ENCODE measurements at regions of chrX and their contacts with region 1.

Region 1: GRCh38 chrX:20266810-20267606 is at the start of gene RPS6KA3:
- DNase-seq: peak; percentile 96
- H3K4me3 Mint-ChIP-seq: peak within 1 kb of the TSS; percentile 92
- H3K27ac Mint-ChIP-seq: peak within 1 kb of the TSS; percentile 96
- H3K4me1 Mint-ChIP-seq: peaks cover 12% of the 10 kb centered on the region
- H3K27me3 Mint-ChIP-seq: peaks cover 7% of the 10 kb centered on the region
- total RNA-seq, gene RPS6KA3: 49.8 and 51.1 TPM in 2 replicates

Region 2: DNA sequence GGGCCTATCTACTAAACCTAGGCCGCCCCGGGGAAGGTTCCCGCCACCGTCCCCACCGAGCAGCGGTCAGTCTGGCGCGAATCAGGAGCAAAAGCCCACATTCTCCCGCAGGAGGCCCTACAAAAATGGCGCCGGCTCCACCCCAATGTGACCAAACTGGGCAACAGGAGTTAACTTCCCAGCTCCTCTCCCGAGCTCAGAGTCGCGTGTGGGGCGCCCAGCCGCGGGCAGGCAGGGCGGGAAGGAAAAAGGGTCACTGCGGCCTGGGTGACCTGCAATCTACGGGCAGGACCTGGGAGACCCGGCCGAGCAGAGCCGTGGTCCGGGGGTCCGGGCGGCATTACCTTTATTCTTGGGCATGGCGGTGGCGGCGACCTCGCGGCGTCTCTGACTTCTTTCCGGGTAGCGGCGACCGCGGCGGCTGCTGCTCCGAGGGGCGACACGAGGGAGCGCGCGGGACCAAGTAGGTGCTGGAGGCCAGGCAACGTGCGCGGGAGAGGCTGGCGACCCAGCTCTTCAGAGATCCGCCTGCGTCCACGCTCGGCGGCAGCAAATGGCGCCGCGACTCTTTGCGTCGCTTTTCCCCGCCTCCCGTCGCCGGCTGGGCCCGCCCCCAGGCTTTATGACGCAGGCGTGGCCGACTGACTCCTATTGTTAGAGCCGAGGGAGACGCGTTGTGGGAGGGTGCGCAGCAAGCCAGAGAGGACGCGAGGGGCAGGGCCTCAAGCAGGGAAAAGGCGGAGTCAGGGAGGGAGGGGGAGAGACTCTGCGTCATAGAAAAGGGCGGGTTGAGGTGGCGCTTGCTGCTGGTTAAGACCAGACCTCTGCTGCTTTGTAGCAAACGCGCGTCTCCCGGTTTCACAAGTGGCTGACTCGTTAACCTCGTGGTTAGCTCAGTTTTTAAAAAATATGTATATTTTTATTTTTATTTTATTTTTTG is 125.5 kb before region 1 on chrX and contains the start of gene EIF1AX:
- intact Hi-C with region 1: loop called (anchors 5 kb)
- DNase-seq: peak; percentile 98
- H3K4me3 Mint-ChIP-seq: peak within 1 kb of the TSS; percentile 88
- H3K27ac Mint-ChIP-seq: peak within 1 kb of the TSS; percentile 89
- H3K4me1 Mint-ChIP-seq: peaks cover 17% of the 10 kb centered on the region
- H3K27me3 Mint-ChIP-seq: no peaks in the 10 kb centered on the region
- total RNA-seq, gene EIF1AX: 112 and 118 TPM in 2 replicates

Region 3: GRCh38 chrX:20224814-20225487 is 42.1 kb before region 1 on chrX:
- intact Hi-C with region 1: loop called (anchors 1 kb)
- DNase-seq: no peak
- H3K4me3 Mint-ChIP-seq: no peak overlapping the region
- H3K27ac Mint-ChIP-seq: peak overlapping the region; percentile 68
- H3K4me1 Mint-ChIP-seq: peaks cover 11% of the 10 kb centered on the region
- H3K27me3 Mint-ChIP-seq: no peaks in the 10 kb centered on the region

Region 4: DNA sequence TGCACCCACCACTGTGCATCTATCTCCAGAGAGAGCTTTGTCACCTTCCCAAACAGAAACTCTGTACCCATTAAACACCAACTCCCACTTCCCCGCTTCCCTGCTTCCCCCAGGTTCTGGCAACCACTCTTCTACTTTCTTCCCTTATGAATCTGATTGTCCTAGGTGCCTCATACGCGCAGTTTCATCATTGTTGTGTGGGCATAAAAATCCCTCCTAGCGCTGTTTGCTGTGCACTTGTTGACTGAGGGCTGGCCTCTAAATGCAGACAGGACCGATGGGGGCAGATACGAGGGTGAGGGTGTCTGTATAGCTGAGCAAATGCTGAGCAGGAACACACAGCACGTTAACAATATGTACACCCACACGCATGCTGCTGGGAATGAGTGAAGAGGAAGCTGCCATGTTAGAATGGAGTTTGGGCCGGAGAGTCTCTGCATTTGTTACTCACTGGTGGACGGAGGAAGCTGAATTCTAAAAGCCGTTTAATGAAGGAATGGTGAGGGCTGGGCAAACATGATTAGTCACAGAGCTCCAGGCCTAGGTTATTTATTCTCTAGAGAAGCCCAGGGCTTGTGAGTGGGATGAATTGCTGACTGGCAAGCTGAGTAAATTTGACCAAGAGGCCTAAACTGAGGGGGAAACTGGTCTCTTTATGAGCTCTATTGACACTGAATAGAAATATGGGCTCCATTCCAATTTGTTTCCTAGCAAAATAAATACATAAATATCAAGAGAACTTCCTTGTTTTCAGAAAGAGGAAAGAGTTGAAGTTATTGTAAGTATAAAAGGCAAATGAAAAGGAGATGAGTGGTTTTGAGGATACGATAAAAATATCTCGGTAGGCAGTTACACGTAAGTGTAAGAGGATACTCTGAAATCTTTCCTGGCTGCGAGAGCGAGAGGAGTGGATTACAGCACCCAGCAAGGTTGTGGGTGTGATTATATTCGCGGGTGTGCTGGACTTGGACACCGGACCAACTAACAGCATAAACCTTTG is 95.6 kb after region 1 on chrX:
- intact Hi-C with region 1: no loop called
- DNase-seq: no peak
- H3K4me3 Mint-ChIP-seq: no peak overlapping the region
- H3K27ac Mint-ChIP-seq: no peak overlapping the region
- H3K4me1 Mint-ChIP-seq: no peaks in the 10 kb centered on the region
- H3K27me3 Mint-ChIP-seq: no peaks in the 10 kb centered on the region

Region 5: DNA sequence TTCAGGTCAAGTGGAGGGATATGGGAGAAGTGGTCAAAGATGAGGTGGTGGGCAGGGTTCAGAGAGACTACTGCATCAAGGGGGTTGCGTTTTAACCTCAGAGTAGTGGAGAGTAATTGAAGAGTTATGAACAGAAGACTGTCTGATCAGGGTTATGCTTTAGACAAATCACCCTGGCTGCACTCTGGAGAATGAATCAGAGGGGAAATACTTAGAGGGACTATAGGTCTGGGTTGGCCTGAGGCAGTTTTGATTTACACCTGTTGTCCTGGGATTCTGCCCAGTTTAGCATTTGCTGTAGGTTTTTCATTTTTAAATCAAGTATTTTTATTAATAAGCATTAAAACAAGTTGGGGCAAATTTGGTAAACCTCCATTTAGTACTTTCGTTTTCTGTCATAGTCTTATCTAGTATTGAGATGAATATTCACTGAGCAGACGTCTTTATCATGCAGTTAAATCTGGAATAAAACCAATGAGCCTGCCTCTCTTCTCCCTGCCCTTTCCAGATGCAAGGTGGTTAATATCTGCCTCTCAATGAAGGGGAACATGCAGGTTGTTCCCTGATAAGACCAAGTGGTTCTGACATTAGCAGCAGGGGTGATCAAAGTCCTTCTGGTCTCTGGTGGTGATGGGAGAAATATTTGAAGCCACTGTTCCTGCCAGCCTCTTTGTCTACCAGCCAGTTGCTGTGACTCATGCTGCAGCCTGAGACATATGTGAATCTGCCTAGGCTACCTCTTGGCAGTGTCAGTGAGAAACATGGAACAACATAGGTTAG is 115.7 kb after region 1 on chrX:
- intact Hi-C with region 1: loop called (anchors 2 kb)
- DNase-seq: peak; percentile 58
- H3K4me3 Mint-ChIP-seq: peak overlapping the region; percentile 5
- H3K27ac Mint-ChIP-seq: peak overlapping the region; percentile 70
- H3K4me1 Mint-ChIP-seq: peaks cover 16% of the 10 kb centered on the region
- H3K27me3 Mint-ChIP-seq: peaks cover 2% of the 10 kb centered on the region

Region 6: DNA sequence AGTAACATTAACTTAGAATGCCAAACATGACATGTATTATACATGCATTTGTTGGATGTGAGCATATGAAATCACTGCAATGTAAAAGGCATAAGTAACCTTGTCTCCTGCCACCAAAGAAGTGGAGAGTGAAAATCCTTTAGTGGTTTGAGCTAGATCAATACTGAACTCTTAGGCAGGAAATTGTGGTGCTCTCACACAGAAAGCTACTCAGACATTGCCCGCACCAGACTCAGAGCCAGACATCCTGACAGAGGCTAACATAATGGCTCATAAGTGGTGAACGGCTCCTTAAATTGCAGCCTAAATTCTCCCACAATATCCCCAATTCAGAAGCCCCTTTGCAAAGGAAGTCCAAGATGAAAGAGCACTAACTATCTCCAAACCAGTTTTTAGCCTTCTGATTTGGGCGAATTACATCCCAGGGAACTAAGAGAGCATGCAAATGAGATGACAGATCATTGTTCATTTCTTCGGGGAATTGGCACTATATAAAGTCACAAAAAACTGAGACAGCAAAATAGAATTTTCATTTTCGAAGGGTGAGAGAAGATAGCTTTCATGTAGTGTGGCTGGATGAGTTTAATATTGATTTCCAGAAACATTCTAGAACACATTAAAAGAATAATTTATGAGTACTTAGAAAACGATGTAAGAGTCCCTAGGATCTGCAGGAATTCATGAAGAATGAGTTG is 233.3 kb after region 1 on chrX:
- intact Hi-C with region 1: loop called (anchors 5 kb)
- DNase-seq: peak; percentile 73
- H3K4me3 Mint-ChIP-seq: peak overlapping the region; percentile 48
- H3K27ac Mint-ChIP-seq: no peak overlapping the region
- H3K4me1 Mint-ChIP-seq: peaks cover 15% of the 10 kb centered on the region
- H3K27me3 Mint-ChIP-seq: peaks cover 43% of the 10 kb centered on the region

Region 7: GRCh38 chrX:20729416-20729815 is 462.4 kb after region 1 on chrX:
- intact Hi-C with region 1: no loop called
- DNase-seq: no peak
- H3K4me3 Mint-ChIP-seq: no peak overlapping the region
- H3K27ac Mint-ChIP-seq: no peak overlapping the region
- H3K4me1 Mint-ChIP-seq: no peaks in the 10 kb centered on the region
- H3K27me3 Mint-ChIP-seq: peaks cover 3% of the 10 kb centered on the region

Region 8: DNA sequence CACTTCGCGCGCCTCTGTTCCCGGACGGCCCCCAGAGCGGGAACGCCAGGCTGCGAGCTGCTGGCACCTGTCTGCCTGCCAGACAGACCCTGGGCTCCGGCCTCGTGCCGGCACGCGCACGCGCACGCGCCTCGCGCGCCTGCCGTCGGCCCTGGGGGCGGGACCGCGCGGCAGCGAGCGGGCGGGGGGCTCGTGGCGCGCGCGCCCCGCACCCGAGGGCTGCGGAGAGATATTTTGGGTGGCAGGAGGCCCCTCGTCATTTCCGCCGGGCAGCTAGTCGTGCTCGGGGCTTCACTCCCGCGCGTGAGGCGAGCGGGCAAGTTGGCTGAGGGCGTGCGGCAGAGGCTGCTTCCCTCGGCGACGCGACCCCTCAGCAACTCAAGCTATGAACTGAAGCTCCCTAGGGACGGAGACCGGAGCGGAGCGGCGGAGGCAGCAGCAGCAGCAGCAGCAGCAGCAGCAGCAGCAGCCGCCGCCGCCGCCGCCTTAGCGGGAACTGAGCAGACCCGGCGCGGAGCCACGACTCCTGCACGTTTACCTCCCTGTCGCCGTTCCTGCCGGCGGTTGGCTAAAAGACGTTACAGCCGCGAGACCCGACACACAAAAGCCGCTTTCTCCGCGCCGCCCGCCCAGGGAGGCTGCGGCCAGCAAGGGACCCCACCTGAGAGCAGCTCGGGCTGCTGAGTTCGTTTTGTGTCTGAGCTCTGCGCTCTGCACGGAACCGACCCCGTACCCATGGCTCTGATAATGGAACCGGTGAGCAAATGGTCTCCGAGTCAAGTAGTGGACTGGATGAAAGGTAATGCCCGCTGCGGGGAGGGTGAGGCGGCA is 1107.4 kb after region 1 on chrX and contains the start of gene CNKSR2:
- intact Hi-C with region 1: loop called (anchors 10 kb)
- DNase-seq: peak; percentile 90
- H3K4me3 Mint-ChIP-seq: peak within 1 kb of the TSS; percentile 94
- H3K27ac Mint-ChIP-seq: peak within 1 kb of the TSS; percentile 83
- H3K4me1 Mint-ChIP-seq: peaks cover 13% of the 10 kb centered on the region
- H3K27me3 Mint-ChIP-seq: peaks cover 5% of the 10 kb centered on the region
- total RNA-seq, gene CNKSR2: 7.1 and 10.2 TPM in 2 replicates

Measured in activated CD4-positive, alpha-beta T cell treated with anti-CD3 and anti-CD28 coated beads, Interleukin-2, amount 10 ng/mL, durations not matched to agents 24 days and 14 days (primary cell).